ENCODE measurements at regions of chr11 and their contacts with region 1.

Region 1: GRCh38 chr11:68257475-68258362 is 14.1 kb downstream of the C11orf24 start:
- DNase-seq: peak; percentile 84 to 95 (median 89)
- ATAC-seq: peak; percentile 95
- H3K4me3 ChIP-seq: no peak overlapping the region
- H3K4me3 Mint-ChIP-seq: peak overlapping the region in 1 of 10 donors; percentile 34
- H3K27ac ChIP-seq: no peak overlapping the region
- H3K27ac Mint-ChIP-seq: peak overlapping the region in 3 of 9 donors; percentile 21 to 85 (median 54)
- H3K4me1 ChIP-seq: peaks cover 3 to 5% of the 10 kb centered on the region in 2 donors
- H3K4me1 Mint-ChIP-seq: peaks cover 2 to 6% (median 4%) of the 10 kb centered on the region in 7 donors
- H3K27me3 ChIP-seq: no peaks in the 10 kb centered on the region
- H3K27me3 Mint-ChIP-seq: peaks cover 0 to 2% (median 0%) of the 10 kb centered on the region in 5 donors

Region 2: GRCh38 chr11:68213555-68214174 is 44.1 kb before region 1 on chr11:
- CTCF ChIA-PET with region 1: no interaction called
- POLR2A ChIA-PET with region 1: no interaction called
- intact Hi-C with region 1: loop called in 1 of 2 experiments (anchors 1 kb)
- DNase-seq: peak; percentile 69 to 92 (median 86)
- ATAC-seq: peak; percentile 70
- H3K4me3 ChIP-seq: peak overlapping the region; percentile 81
- H3K4me3 Mint-ChIP-seq: peak overlapping the region; percentile 69 to 98 (median 78)
- H3K27ac ChIP-seq: peak overlapping the region; percentile 88
- H3K27ac Mint-ChIP-seq: peak overlapping the region in 7 of 9 donors; percentile 35 to 99 (median 92)
- H3K4me1 ChIP-seq: peaks cover 27% of the 10 kb centered on the region in 2 donors
- H3K4me1 Mint-ChIP-seq: peaks cover 35 to 50% (median 45%) of the 10 kb centered on the region in 7 donors
- H3K27me3 ChIP-seq: no peaks in the 10 kb centered on the region
- H3K27me3 Mint-ChIP-seq: peaks cover 0 to 28% (median 0%) of the 10 kb centered on the region in 5 donors

Region 3: GRCh38 chr11:68383976-68384501 is 126.3 kb after region 1 on chr11:
- CTCF ChIA-PET with region 1: interaction called, 3 read pairs
- POLR2A ChIA-PET with region 1: no interaction called
- intact Hi-C with region 1: loop called in 1 of 2 experiments (anchors 1 kb)
- DNase-seq: peak; percentile 16 to 74 (median 53)
- ATAC-seq: peak; percentile 59
- H3K4me3 ChIP-seq: no peak overlapping the region
- H3K4me3 Mint-ChIP-seq: no peak overlapping the region
- H3K27ac ChIP-seq: no peak overlapping the region
- H3K27ac Mint-ChIP-seq: peak overlapping the region in 1 of 9 donors; percentile 29
- H3K4me1 ChIP-seq: no peaks in the 10 kb centered on the region
- H3K4me1 Mint-ChIP-seq: peaks cover 0 to 42% (median 12%) of the 10 kb centered on the region in 7 donors
- H3K27me3 ChIP-seq: no peaks in the 10 kb centered on the region
- H3K27me3 Mint-ChIP-seq: peaks cover 0 to 13% (median 6%) of the 10 kb centered on the region in 5 donors

Measured in naive thymus-derived CD4-positive, alpha-beta T cell (primary cell).